ENCODE measurements at regions of chr4 and their contacts with region 1.

Region 1: DNA sequence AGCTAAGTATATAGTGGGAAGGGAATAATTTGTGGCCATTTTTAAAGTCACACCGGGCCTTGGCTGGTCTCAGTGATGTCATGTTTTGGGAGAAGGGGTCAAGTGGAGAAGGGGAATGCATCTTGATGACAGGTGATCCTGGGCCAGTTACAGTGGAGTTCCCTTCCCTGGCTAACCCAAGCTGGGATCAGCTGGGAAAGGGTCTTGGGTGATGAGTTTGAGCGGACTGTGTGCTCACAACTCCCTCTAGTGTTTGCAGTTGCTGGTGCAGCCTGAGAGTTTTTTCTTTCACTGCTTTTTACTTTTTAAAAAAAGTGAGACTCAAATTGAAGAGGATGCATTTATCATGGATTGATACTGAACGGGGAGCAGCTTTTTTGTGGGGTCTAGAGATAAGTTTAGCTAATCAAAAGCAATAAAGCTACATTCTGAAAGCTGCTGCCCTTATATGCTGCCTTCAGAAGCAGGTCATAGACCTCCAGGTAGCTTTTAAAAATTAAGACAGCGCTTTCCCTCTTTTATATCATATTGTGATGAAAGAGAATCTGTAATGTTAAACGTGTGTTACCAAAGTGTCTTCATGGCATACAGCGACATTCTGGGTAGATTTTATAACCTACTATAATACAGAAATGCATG is 164.7 kb downstream of the DCLK2 start:
- DNase-seq: no peak
- H3K4me3 ChIP-seq: no peak overlapping the region
- H3K27ac ChIP-seq: no peak overlapping the region
- H3K4me1 ChIP-seq: no peaks in the 10 kb centered on the region
- H3K27me3 ChIP-seq: no peaks in the 10 kb centered on the region
- CTCF ChIP-seq: peak; percentile 33 to 68 (median 64)
- POLR2A ChIP-seq: no peak

Region 2: GRCh38 chr4:149645790-149646189 is 597.1 kb before region 1 on chr4:
- intact Hi-C with region 1: no loop called
- DNase-seq: no peak
- H3K4me3 ChIP-seq: no peak overlapping the region
- H3K27ac ChIP-seq: no peak overlapping the region
- H3K4me1 ChIP-seq: no peaks in the 10 kb centered on the region
- H3K27me3 ChIP-seq: no peaks in the 10 kb centered on the region
- CTCF ChIP-seq: no peak
- POLR2A ChIP-seq: no peak

Region 3: DNA sequence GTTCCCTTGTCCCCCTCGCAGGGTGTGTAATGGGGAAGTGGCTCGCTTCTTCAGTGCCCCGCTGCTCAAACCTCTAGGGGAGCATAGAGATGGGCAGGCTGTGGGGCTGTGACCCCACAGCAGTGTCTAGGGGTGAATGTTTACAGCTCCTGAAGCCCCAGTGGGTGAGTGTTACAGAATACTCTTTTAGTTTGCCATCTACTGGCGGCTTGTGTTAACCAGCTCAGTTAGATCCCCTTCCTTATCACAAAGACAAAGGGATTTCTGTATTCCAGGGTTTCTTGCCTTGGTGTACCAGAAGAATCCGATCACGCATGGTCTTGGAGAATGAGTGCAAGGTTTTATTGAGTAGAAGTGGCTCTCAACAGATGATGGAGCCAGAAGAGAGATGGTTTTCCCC is 319.2 kb before region 1 on chr4:
- intact Hi-C with region 1: no loop called
- DNase-seq: no peak
- H3K4me3 ChIP-seq: no peak overlapping the region
- H3K27ac ChIP-seq: no peak overlapping the region
- H3K4me1 ChIP-seq: no peaks in the 10 kb centered on the region
- H3K27me3 ChIP-seq: no peaks in the 10 kb centered on the region
- CTCF ChIP-seq: no peak
- POLR2A ChIP-seq: no peak

Region 4: DNA sequence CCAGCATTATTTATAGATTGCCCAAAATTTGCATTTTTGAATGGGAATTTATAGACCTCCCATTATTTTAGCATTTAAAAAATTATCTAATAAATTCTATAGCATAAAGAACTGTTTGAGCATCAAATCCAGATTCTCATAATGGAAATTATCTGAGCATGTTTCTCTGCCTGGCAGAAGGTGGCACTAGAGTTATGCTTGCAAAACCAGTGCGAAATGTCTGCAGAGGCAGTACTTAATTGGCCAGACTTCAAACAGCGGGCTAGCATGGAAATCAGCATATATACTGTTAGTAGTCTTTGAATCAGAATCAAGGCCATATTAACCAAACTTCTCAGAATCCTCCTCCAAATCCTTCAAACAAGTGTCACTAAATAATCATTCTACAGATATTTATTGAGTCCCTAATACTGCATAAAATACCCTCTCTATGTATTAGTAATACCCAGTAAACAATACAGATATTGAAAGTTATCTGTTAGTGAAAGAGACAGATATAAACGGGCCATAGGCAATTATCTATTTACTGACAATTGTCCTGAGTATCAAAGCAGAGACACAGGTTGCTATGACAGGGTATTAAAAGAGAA is 243.4 kb before region 1 on chr4:
- intact Hi-C with region 1: loop called (anchors 10 kb)
- DNase-seq: no peak
- H3K4me3 ChIP-seq: no peak overlapping the region
- H3K27ac ChIP-seq: no peak overlapping the region
- H3K4me1 ChIP-seq: no peaks in the 10 kb centered on the region
- H3K27me3 ChIP-seq: no peaks in the 10 kb centered on the region
- CTCF ChIP-seq: peak; percentile 15 to 55 (median 52)
- POLR2A ChIP-seq: no peak